ENCODE measurements at regions of chrX and their contacts with region 1.

Region 1: GRCh38 chrX:46912098-46912602 is at the start of gene JADE3:
- DNase-seq: peak; percentile 13 to 82
- H3K4me3 ChIP-seq: peak within 1 kb of the TSS; percentile 65 to 81
- H3K27ac ChIP-seq: peak within 1 kb of the TSS; percentile 54 to 73
- H3K4me1 ChIP-seq: peaks cover 0 to 2% of the 10 kb centered on the region in 2 donors
- H3K27me3 ChIP-seq: no peaks in the 10 kb centered on the region
- CTCF ChIP-seq: no peak
- total RNA-seq, gene JADE3: 1.8 TPM

Region 2: DNA sequence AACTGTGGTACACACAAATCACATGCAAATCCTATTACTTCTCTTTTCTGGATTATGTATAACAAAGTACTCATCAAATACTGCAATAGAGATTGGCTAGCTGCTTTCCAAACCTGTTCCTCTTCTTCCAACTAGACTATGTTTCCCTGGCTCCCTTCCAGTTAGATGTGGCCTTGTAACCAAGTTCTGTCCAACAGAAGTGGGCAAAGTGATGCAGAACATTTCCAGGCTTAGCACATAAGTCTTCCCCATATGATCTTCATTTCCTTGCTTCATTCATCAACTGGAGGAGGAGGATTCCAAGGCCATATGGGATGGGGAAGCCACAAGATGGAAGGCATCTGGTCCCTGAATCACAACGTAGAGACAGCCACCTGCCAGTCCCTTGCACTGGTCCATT is 161.3 kb before region 1 on chrX:
- intact Hi-C with region 1: no loop called
- DNase-seq: no peak
- H3K4me3 ChIP-seq: no peak overlapping the region
- H3K27ac ChIP-seq: no peak overlapping the region
- H3K4me1 ChIP-seq: no peaks in the 10 kb centered on the region
- H3K27me3 ChIP-seq: no peaks in the 10 kb centered on the region
- CTCF ChIP-seq: no peak

Region 3: DNA sequence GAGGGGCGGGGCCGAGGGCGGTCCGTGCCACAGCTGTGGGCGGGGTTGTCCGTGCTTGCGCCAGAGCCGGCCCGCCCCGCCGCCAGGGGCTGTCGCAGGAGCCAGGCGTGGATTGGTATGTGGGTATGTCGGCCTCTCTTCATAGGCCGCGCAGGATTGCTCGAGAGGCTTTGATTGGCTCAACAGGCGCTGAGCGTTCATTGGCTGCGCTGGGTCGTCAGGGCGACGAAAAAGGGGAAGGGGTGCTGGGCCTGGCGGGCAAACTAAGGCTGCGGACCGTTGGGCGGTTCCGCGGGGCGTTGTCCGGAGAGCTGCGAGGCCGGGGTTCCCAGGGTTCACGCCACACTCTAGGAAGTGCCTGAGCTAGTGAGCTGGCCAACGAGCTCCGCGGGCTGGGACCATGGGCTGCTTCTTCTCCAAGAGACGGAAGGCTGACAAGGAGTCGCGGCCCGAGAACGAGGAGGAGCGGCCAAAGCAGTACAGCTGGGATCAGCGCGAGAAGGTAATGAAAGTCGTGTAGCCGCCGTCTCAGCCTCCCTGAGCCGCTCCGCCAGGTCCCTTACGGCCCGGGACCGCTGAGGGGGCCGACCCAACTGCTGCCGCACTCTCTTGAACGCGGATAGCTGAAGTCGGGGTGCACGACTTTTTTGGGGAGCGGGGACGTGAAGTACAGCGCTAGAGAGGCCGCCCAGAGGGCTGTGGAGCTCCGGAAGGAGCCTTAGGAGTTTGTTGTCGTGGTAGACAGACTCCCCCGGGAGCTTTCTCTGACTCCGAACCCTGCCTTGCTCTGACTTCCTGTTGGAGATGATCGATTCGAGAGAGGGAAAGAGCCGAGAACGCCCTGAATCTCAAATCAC is 75.2 kb before region 1 on chrX and contains the start of gene RP2:
- intact Hi-C with region 1: loop called (anchors 2 kb)
- DNase-seq: peak; percentile 86 to 96
- H3K4me3 ChIP-seq: peak within 1 kb of the TSS; percentile 69 to 75
- H3K27ac ChIP-seq: peak within 1 kb of the TSS; percentile 79 to 88
- H3K4me1 ChIP-seq: peaks cover 0 to 8% of the 10 kb centered on the region in 2 donors
- H3K27me3 ChIP-seq: no peaks in the 10 kb centered on the region
- CTCF ChIP-seq: no peak
- total RNA-seq, gene RP2: 6.6 TPM

Region 4: DNA sequence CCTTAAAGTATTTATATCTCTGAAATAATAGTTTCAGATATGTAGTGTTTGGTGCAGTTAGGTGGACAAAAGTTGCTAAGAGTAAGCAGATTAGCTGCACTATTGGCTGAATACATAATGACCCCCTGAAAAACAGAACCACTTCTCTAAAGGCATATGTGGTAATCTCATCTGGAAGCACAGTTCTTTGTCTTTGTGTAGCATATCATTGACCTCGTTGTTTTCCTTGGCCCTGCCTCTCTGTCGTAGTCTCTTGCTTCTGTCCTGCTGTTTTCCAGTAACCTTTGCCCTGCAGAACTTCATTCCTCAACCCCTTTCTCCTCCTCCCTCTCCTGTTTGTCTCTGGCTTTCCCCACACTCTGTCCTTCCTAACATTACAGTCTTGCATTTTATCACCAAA is 41.4 kb after region 1 on chrX:
- intact Hi-C with region 1: no loop called
- DNase-seq: no peak
- H3K4me3 ChIP-seq: no peak overlapping the region
- H3K27ac ChIP-seq: no peak overlapping the region
- H3K4me1 ChIP-seq: peaks cover 0 to 4% of the 10 kb centered on the region in 2 donors
- H3K27me3 ChIP-seq: no peaks in the 10 kb centered on the region
- CTCF ChIP-seq: no peak

Region 5: DNA sequence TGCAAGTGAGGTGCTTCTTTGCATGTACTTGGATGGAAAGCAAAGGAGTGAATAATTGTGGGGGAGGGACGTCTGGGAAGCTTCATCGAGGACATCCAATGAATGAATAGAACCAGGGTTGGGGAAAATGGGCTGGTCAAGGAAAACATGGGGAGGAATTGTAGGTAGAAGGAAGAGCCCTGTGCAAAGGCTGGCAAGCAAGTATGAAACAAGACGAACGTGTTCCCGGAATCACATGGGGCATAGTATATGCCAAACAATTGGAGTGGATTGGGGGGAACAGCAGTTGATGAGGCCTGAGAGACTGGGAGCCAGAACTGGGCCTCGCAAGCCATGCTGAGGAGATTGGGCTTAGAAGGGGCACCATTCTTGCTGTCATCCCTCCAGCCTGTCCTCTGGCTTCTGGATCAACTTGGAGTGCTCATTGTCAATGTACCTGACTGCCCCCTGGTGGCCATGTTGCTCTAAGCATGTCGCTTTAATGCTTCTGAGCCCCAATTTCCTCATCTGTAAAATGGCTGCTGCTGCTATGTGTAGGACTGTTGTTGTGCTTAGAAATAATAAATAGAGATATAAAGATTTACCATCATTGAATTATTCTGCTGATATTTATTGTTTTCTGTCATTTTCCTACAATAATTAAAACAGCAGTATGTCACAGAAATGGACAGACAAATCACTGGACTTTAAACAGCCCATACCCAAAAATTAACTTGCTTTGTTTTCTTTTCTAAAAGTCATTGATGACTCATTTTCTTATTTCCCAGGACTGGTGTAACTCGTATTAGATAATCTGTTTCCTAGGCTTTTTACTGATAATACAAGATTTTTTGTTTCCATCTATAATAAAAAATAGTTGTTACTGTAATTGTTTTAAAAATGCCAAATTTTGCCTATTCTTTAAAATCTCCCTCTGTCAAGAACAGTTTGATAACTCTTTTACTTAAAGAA is 66.5 kb after region 1 on chrX:
- intact Hi-C with region 1: loop called (anchors 2 kb)
- DNase-seq: peak in 1 of 2 donors; percentile 77
- H3K4me3 ChIP-seq: no peak overlapping the region
- H3K27ac ChIP-seq: peak overlapping the region in 1 of 2 donors; percentile 51
- H3K4me1 ChIP-seq: no peaks in the 10 kb centered on the region
- H3K27me3 ChIP-seq: no peaks in the 10 kb centered on the region
- CTCF ChIP-seq: peak; percentile 13 to 52 (median 42)